ENCODE measurements at regions of chr5 and their contacts with region 1.

Region 1: DNA sequence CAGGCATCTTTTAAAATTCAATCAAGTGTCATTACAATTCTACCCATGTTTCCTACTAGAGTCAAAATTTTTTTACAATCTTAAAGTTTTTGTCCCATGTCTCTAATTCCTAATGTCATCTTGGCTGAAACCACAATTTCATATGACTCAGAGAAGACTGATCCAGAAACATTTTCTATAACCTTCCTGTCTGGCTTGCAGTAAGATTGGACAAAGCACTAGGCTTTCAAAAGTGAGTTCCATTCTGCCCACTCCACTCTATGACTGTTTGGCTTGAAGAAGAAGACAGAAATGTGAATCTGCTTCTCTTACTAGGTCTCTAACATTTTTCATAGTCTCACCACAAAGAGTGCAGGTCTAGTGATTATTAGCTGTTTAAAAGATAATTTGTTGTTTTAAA is 88.8 kb downstream of the NR3C1 start:
- DNase-seq: no peak
- ATAC-seq: no peak
- H3K4me3 Mint-ChIP-seq: no peak overlapping the region
- H3K27ac Mint-ChIP-seq: peak overlapping the region; percentile 68
- H3K4me1 Mint-ChIP-seq: peaks cover 68% of the 10 kb centered on the region
- H3K27me3 Mint-ChIP-seq: no peaks in the 10 kb centered on the region
- CTCF ChIP-seq: no peak

Region 2: DNA sequence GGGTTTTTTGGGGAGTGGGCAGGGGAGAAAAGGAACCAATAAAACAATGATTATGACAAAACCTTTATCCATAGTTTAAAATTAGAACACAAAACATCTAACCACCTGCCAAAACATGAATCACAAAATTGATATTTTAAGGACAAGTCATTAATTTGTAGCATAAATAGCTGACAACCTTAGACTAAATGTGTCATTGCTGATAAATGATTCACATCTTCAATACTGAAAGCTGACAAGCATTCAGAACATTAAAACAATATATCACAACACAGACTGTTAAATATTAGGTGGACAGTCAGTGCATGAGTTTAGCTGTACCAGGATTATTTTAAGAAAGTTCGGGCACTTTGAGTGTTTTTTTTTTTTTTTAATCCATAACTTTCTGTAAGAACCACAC is 17.3 kb after region 1 on chr5:
- CTCF ChIA-PET with region 1: no interaction called
- POLR2A ChIA-PET with region 1: no interaction called
- intact Hi-C with region 1: loop called (anchors 2 kb)
- DNase-seq: no peak
- ATAC-seq: no peak
- H3K4me3 Mint-ChIP-seq: no peak overlapping the region
- H3K27ac Mint-ChIP-seq: no peak overlapping the region
- H3K4me1 Mint-ChIP-seq: peaks cover 35% of the 10 kb centered on the region
- H3K27me3 Mint-ChIP-seq: no peaks in the 10 kb centered on the region
- CTCF ChIP-seq: no peak

Measured in activated B cell treated with CpG ODN at 0.5 μM for 24 hours (primary cell).